Left cardiac atrium (tissue), 4 donors: ENCODE measurements at regions of chr3 and their contacts with region 1.

Region 1: DNA sequence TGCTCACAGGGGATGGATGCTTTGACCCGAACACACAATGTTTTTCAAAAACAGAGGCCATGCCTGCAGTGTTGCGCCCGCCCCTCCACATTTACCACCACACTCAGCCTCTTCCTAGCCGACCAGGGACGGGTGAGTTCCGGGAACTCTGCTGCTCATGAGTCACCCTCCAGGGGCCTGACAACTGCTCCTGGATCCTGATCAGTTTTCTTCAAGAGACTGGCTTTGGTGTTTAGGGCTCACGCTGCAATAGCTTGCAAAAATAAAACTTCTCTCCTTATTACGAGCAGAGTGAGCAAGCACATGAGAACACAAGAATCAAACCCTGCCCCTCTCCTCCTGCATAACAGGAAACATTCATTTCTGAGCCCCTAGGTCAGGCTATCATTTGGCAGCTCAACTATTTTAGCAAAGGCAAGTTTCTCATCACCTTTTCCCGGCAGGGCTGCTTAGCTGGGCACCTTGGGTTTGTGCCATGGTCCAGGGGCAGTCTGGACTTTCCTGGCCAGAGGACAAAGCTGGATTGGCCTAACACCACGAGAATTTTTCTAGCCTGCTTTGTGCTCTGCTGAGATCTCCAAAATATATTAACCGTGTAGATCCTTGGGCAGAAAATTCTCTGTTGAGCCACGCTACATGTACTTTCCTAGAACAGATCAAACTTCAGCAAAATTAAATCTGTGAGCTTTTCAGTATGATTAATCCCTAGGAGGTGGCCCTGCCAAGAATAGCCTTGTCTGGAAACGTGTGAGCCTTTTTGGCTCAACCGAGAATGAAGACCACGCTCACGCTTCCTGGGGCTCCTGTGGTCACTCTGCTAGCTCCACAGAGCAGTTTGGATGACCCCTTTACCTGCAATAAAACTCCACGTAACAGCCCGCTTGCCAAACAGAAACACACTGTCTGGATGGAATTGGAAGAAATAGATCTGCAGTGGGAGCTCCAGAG is 52.7 kb upstream of the SPATA12 start:
- DNase-seq: peak; percentile 75
- ATAC-seq: peak; percentile 85 to 91

Region 2: GRCh38 chr3:56960234-56960917 is 47.4 kb before region 1 on chr3:
- intact Hi-C with region 1: no loop called
- DNase-seq: no peak
- ATAC-seq: no peak

Region 3: DNA sequence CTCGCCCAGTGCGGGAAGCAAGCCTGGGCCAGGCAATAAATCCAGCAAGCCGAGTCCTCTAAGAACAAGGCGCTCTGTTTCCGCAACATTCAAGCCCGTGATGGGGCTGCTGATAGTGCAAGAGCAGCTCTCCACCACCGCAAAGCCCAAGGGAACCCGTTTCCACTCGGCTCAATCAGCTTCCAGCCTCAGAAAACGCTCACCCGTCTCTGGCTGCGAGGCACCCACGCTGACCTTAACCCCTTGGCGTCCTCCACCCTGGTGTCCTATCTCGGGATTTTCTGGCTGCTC is 70.5 kb after region 1 on chr3:
- intact Hi-C with region 1: loop called in 1 of 2 experiments (anchors 5 kb)
- DNase-seq: peak; percentile 56
- ATAC-seq: peak; percentile 58 to 70